PC-9 (cell line): ENCODE measurements at regions of chr11 and their contacts with region 1.

Region 1: GRCh38 chr11:111148121-111148520 is 97.4 kb upstream of the POU2AF2 start:
- DNase-seq: no peak
- H3K4me3 ChIP-seq: no peak overlapping the region
- H3K27ac ChIP-seq: no peak overlapping the region
- H3K4me1 ChIP-seq: no peaks in the 10 kb centered on the region
- H3K27me3 ChIP-seq: no peaks in the 10 kb centered on the region
- CTCF ChIP-seq: no peak

Region 2: DNA sequence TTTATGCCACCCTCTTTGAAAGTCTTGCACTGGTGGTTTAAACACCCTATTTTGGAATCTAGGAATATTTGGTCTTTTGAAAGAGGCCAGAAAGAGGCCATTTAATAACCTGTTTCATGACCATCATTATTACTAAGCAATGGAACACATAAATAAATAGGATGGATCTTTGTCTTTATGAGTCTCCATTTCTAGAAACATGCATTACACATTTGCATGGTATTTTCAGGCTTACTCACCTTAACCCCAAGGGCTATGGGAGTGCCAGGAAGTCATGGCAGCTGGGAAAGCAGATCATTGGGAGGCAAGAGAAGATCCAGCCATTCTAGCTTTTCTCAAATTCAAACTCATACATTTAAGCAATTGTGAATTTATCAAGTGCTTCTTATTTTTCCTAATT is 88.4 kb before region 1 on chr11:
- CTCF ChIA-PET with region 1: no interaction called
- POLR2A ChIA-PET with region 1: no interaction called
- intact Hi-C with region 1: no loop called
- DNase-seq: peak in 1 of 2 experiments; percentile 53
- H3K4me3 ChIP-seq: no peak overlapping the region
- H3K27ac ChIP-seq: no peak overlapping the region
- H3K4me1 ChIP-seq: no peaks in the 10 kb centered on the region
- H3K27me3 ChIP-seq: no peaks in the 10 kb centered on the region
- CTCF ChIP-seq: no peak

Region 3: GRCh38 chr11:111086058-111086457 is 62.1 kb before region 1 on chr11:
- CTCF ChIA-PET with region 1: no interaction called
- POLR2A ChIA-PET with region 1: interaction called, 12 read pairs
- intact Hi-C with region 1: no loop called
- DNase-seq: no peak
- H3K4me3 ChIP-seq: no peak overlapping the region
- H3K27ac ChIP-seq: no peak overlapping the region
- H3K4me1 ChIP-seq: no peaks in the 10 kb centered on the region
- H3K27me3 ChIP-seq: no peaks in the 10 kb centered on the region
- CTCF ChIP-seq: no peak

Region 4: GRCh38 chr11:111245425-111245824 is 97.3 kb after region 1 on chr11 and contains the start of gene POU2AF2:
- CTCF ChIA-PET with region 1: no interaction called
- POLR2A ChIA-PET with region 1: no interaction called
- intact Hi-C with region 1: no loop called
- DNase-seq: no peak
- H3K4me3 ChIP-seq: no peak within 1 kb of the TSS
- H3K27ac ChIP-seq: no peak within 1 kb of the TSS
- H3K4me1 ChIP-seq: no peaks in the 10 kb centered on the region
- H3K27me3 ChIP-seq: no peaks in the 10 kb centered on the region; the same call in 1 of the 2 replicates
- CTCF ChIP-seq: no peak
- total RNA-seq, gene POU2AF2: not detected in 2 replicates